IMR-90 (cell line): ENCODE measurements at regions of chr20 and their contacts with region 1.

Region 1: DNA sequence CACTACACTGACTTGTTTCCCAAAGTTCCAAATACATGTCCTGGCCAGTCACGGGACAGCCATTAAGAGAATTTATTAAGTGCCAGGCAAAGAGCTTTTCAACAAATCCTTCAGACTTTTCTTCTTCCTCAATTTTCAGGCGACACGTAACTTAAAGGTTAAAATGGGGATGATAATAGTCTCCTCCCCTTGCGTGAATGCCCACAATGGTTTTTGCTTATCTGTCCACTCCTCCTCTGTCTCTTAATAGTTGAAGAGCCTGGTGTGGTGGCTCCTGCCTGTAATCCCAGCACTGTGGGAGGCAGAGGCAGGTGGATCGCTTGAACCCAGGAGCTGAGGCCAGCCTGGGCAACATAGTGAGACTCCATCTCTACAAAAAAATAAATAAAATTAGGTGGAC is 11.4 kb upstream of the PARD6B start:
- DNase-seq: no peak
- ATAC-seq: no peak
- H3K4me3 ChIP-seq: no peak overlapping the region
- H3K27ac ChIP-seq: no peak overlapping the region
- H3K4me1 ChIP-seq: peaks cover 8% of the 10 kb centered on the region
- H3K27me3 ChIP-seq: no peaks in the 10 kb centered on the region
- CTCF ChIP-seq: no peak
- POLR2A ChIP-seq: no peak
- RAD21 ChIP-seq: no peak

Region 2: DNA sequence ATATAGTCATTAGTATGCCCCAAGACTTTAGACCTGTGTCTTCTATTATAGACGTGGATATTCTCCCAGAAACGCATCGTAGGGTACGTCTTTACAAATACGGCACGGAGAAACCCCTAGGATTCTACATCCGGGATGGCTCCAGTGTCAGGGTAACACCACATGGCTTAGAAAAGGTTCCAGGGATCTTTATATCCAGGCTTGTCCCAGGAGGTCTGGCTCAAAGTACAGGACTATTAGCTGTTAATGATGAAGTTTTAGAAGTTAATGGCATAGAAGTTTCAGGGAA is 29.7 kb after region 1 on chr20:
- CTCF ChIA-PET with region 1: interaction called, 4 read pairs
- POLR2A ChIA-PET with region 1: interaction called, 10 read pairs
- dilution Hi-C with region 1: no loop called
- in situ Hi-C with region 1: no loop called
- intact Hi-C with region 1: no loop called
- DNase-seq: no peak
- ATAC-seq: no peak
- H3K4me3 ChIP-seq: no peak overlapping the region
- H3K27ac ChIP-seq: no peak overlapping the region
- H3K4me1 ChIP-seq: peaks cover 4% of the 10 kb centered on the region
- H3K27me3 ChIP-seq: no peaks in the 10 kb centered on the region
- CTCF ChIP-seq: no peak
- POLR2A ChIP-seq: no peak
- RAD21 ChIP-seq: no peak